IMR-90 (cell line): ENCODE measurements at regions of chr1 and their contacts with region 1.

Region 1: DNA sequence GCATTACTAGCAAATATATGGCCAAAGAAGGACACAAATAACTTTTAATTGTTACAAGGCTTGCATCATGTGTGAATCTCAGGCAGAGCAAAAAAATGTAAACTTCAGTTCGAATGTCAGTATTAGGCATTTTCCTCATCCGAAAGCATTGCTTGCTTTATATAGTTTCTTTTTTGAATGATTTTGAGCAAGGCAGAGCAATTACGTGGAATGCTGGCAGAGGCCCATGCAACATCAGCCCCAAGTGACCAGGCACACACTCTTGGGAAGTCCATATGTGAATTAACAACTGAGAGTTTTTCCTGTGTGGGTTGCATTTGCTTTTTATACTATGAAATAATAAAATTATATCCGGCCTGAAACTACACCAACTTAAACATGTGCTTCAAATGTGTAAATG is 274.8 kb downstream of the PTPRC start:
- DNase-seq: peak; percentile 78
- ATAC-seq: peak; percentile 73
- H3K4me3 ChIP-seq: no peak overlapping the region
- H3K27ac ChIP-seq: peak overlapping the region; percentile 51; the same call in 1 of the 2 replicates
- H3K4me1 ChIP-seq: peaks cover 11% of the 10 kb centered on the region
- H3K27me3 ChIP-seq: no peaks in the 10 kb centered on the region
- CTCF ChIP-seq: no peak
- POLR2A ChIP-seq: no peak
- RAD21 ChIP-seq: no peak

Region 2: GRCh38 chr1:198880818-198881597 is 32.7 kb before region 1 on chr1:
- CTCF ChIA-PET with region 1: no interaction called
- POLR2A ChIA-PET with region 1: no interaction called
- dilution Hi-C with region 1: no loop called
- in situ Hi-C with region 1: no loop called
- intact Hi-C with region 1: loop called (anchors 1 kb)
- DNase-seq: peak; percentile 97
- ATAC-seq: peak; percentile 89
- H3K4me3 ChIP-seq: no peak overlapping the region
- H3K27ac ChIP-seq: peak overlapping the region; percentile 94
- H3K4me1 ChIP-seq: peaks cover 6% of the 10 kb centered on the region
- H3K27me3 ChIP-seq: no peaks in the 10 kb centered on the region
- CTCF ChIP-seq: no peak
- POLR2A ChIP-seq: no peak
- RAD21 ChIP-seq: no peak

Region 3: DNA sequence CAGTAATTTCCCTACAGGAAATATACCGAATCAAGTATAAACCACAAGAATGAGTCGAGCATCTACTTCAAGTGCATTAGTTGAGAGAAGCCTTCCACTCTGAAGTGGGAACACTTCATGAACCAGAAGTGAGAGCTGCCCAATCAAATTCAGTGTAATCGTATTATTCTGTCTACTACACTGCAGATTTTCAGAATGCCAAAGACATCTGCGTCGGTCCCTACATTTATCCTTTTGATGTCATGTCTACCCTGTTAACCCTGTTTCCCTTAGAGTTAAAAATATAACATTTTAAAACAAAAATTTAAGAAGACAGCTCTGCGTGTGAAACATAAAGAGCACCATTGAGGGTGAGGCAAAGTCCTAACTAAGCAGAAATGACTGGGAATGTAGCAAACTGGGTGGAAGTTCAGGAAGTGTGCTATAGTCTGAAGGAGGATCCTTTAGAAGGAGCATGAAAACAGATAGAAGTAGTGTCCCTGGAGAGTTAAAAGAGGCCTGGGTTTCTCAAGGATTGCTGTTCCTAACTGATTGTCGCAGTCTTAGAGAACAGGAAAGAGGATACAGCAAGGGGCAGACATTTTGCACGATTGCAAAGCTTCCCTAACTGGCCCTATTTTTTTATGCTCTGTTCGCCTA is 16.4 kb after region 1 on chr1:
- CTCF ChIA-PET with region 1: no interaction called
- POLR2A ChIA-PET with region 1: no interaction called
- dilution Hi-C with region 1: no loop called
- in situ Hi-C with region 1: no loop called
- intact Hi-C with region 1: no loop called
- DNase-seq: peak; percentile 31
- ATAC-seq: peak; percentile 59
- H3K4me3 ChIP-seq: peak overlapping the region; percentile 20; the same call in 1 of the 2 replicates
- H3K27ac ChIP-seq: peak overlapping the region; percentile 62; the same call in 1 of the 2 replicates
- H3K4me1 ChIP-seq: peaks cover 8% of the 10 kb centered on the region; the same call in 1 of the 2 replicates
- H3K27me3 ChIP-seq: no peaks in the 10 kb centered on the region
- CTCF ChIP-seq: no peak
- POLR2A ChIP-seq: no peak
- RAD21 ChIP-seq: no peak

Region 4: GRCh38 chr1:198959032-198959431 is 45.4 kb after region 1 on chr1:
- CTCF ChIA-PET with region 1: no interaction called
- POLR2A ChIA-PET with region 1: no interaction called
- dilution Hi-C with region 1: no loop called
- in situ Hi-C with region 1: no loop called
- intact Hi-C with region 1: no loop called
- DNase-seq: no peak
- ATAC-seq: no peak
- H3K4me3 ChIP-seq: no peak overlapping the region
- H3K27ac ChIP-seq: no peak overlapping the region
- H3K4me1 ChIP-seq: no peaks in the 10 kb centered on the region
- H3K27me3 ChIP-seq: no peaks in the 10 kb centered on the region
- CTCF ChIP-seq: no peak
- POLR2A ChIP-seq: no peak
- RAD21 ChIP-seq: no peak